ENCODE measurements at regions of chrX and their contacts with region 1.

Region 1: GRCh38 chrX:12791257-12792228 is at the start of gene PRPS2:
- DNase-seq: peak; percentile 81
- ATAC-seq: peak; percentile 91
- H3K4me3 Mint-ChIP-seq: peak within 1 kb of the TSS; percentile 82
- H3K27ac Mint-ChIP-seq: peak within 1 kb of the TSS; percentile 87
- H3K4me1 Mint-ChIP-seq: peaks cover 38% of the 10 kb centered on the region
- H3K27me3 Mint-ChIP-seq: peaks cover 9% of the 10 kb centered on the region
- total RNA-seq, gene PRPS2: 84.5 to 94.3 TPM

Region 2: DNA sequence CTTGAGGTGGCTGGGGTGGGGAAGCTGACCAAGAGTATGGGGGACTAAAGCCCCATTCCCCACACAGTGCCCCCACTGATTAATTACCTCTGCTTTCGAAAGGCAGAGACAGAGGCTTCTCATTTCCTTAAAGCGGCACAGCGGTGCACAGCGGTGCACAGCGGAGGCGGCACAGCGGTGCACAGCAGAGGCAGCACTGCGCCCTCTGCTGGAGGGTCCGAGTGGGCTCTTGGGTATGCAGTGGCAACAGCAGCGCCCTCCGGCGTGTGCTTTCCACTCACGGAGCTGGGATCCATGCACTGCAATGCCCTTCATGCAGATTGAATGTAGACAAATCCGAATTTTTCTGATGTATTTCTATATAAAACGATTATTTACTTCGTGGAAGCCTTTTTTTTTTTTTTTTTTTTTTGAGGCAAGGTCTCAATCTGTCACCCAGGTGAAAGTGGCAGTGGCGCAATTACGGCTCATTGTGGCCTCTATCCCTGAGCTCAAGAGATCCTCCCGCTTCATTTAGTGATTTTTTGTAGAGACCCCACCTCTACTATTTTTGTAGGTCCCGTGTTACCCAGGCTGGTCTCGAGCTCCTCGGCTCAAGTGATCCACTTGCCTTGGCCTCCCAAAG is 20.0 kb before region 1 on chrX:
- CTCF ChIA-PET with region 1: interaction called, 48 read pairs
- POLR2A ChIA-PET with region 1: no interaction called
- DNase-seq: peak; percentile 77
- ATAC-seq: peak; percentile 100
- H3K4me3 Mint-ChIP-seq: no peak overlapping the region
- H3K27ac Mint-ChIP-seq: no peak overlapping the region
- H3K4me1 Mint-ChIP-seq: peaks cover 11% of the 10 kb centered on the region
- H3K27me3 Mint-ChIP-seq: peaks cover 20% of the 10 kb centered on the region

Region 3: DNA sequence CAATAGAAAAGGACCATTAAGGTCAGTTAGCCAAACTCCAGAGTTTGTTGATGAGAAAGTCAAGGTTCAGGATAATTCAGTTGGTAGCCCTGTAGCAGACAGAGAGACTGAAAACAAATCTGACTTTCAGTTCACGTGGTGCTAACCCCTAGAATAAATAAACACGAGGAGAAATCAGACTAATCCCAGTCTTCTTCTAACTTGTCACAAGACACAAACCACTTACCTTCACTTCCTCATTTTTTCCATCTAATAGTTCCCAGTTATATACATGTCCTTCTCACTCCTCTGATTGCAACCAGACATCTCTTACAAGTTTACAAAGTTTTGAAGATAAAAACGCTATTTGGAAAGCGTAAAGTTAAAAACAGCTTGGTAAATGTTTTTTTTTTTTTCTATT is 83.0 kb after region 1 on chrX:
- CTCF ChIA-PET with region 1: no interaction called
- POLR2A ChIA-PET with region 1: no interaction called
- DNase-seq: no peak
- ATAC-seq: no peak
- H3K4me3 Mint-ChIP-seq: no peak overlapping the region
- H3K27ac Mint-ChIP-seq: no peak overlapping the region
- H3K4me1 Mint-ChIP-seq: no peaks in the 10 kb centered on the region
- H3K27me3 Mint-ChIP-seq: no peaks in the 10 kb centered on the region

Measured in activated CD8-positive, alpha-beta T cell treated with anti-CD3 and anti-CD28 coated beads, Interleukin-2, amount 10 ng/mL, durations not matched to agents 7 days and 5 days (primary cell).